ENCODE measurements at regions of chr1 and their contacts with region 1.

Region 1: GRCh38 chr1:61049850-61050540 is 32.4 kb upstream of the NFIA start:
- DNase-seq: peak; percentile 87 to 95
- ATAC-seq: peak; percentile 66 to 70
- H3K4me3 ChIP-seq: peak overlapping the region; percentile 75 to 99 (median 96)
- H3K27ac ChIP-seq: peak overlapping the region; percentile 92 to 100 (median 96)
- H3K4me1 ChIP-seq: peaks cover 22 to 28% of the 10 kb centered on the region in 2 donors
- H3K27me3 ChIP-seq: no peaks in the 10 kb centered on the region
- CTCF ChIP-seq: peak; percentile 94 to 99 (median 97)
- POLR2A ChIP-seq: peak in 1 of 2 donors; percentile 54

Region 2: DNA sequence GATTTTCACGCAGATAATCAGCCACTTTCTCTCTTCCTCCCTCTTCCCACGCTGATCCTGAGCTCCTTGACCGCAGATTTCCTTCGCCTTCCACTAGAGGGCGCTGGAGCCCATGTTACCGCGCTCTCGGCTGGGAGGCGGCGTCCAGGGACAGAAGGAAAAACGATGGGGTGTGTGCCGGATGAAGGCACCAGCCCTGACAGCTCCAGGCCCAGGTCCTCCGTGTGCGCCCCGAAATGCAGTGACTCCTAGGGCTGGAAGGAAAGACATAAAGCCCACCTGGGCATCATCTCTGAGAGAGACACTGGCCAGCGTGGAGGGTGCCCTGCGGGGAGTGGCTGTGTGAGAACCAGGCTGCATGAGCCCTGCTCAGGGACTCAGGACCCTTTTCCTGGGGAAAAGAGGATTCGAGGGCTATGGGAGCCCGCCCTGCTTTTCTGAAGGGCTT is 1078.5 kb before region 1 on chr1:
- in situ Hi-C with region 1: loop called in 3 of 4 experiments (anchors 25 kb)
- intact Hi-C with region 1: no loop called
- DNase-seq: peak; percentile 6 to 44
- ATAC-seq: peak; percentile 80 to 90
- H3K4me3 ChIP-seq: no peak overlapping the region
- H3K27ac ChIP-seq: no peak overlapping the region
- H3K4me1 ChIP-seq: peaks cover 8 to 11% of the 10 kb centered on the region in 2 donors
- H3K27me3 ChIP-seq: no peaks in the 10 kb centered on the region
- CTCF ChIP-seq: peak; percentile 51 to 90 (median 81)
- POLR2A ChIP-seq: no peak

Region 3: GRCh38 chr1:60813071-60813470 is 236.9 kb before region 1 on chr1:
- in situ Hi-C with region 1: no loop called
- intact Hi-C with region 1: no loop called
- DNase-seq: no peak
- ATAC-seq: no peak
- H3K4me3 ChIP-seq: no peak overlapping the region
- H3K27ac ChIP-seq: no peak overlapping the region
- H3K4me1 ChIP-seq: no peaks in the 10 kb centered on the region
- H3K27me3 ChIP-seq: no peaks in the 10 kb centered on the region
- CTCF ChIP-seq: no peak
- POLR2A ChIP-seq: no peak

Region 4: GRCh38 chr1:60989749-60990713 is 60.0 kb before region 1 on chr1:
- in situ Hi-C with region 1: no loop called
- intact Hi-C with region 1: no loop called
- DNase-seq: peak in 1 of 2 donors; percentile 19
- ATAC-seq: peak in 1 of 2 donors; percentile 37
- H3K4me3 ChIP-seq: no peak overlapping the region
- H3K27ac ChIP-seq: peak overlapping the region in 2 of 4 donors; percentile 24 to 44
- H3K4me1 ChIP-seq: peaks cover 4 to 12% of the 10 kb centered on the region in 2 donors
- H3K27me3 ChIP-seq: no peaks in the 10 kb centered on the region
- CTCF ChIP-seq: no peak
- POLR2A ChIP-seq: no peak

Region 5: DNA sequence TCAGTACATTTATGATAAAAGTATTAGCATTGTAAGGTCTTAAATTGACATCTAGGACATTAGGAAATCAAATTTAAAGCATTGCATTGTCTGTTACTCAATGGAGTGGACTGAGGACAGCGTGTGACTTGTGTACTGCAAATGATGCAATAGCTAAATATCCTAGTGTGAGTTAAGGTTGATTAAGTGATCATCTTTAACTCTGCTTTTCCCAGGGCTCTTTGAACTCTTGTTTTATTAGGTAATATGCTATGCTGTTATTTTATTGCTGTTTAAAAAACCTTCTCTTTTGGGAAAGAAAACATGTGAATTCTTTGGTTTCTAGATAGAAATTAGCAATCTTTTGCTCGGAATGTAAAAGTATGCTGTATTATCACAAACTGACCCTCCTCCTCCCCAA is 71.0 kb after region 1 on chr1:
- in situ Hi-C with region 1: no loop called
- intact Hi-C with region 1: loop called (anchors 2 kb)
- DNase-seq: peak; percentile 32 to 45
- ATAC-seq: peak; percentile 79 to 81
- H3K4me3 ChIP-seq: peak overlapping the region; percentile 35 to 46 (median 45)
- H3K27ac ChIP-seq: peak overlapping the region; percentile 81 to 93 (median 88)
- H3K4me1 ChIP-seq: peaks cover 86 to 91% of the 10 kb centered on the region in 2 donors
- H3K27me3 ChIP-seq: no peaks in the 10 kb centered on the region
- CTCF ChIP-seq: peak in 1 of 5 experiments; percentile 9
- POLR2A ChIP-seq: peak in 1 of 2 donors; percentile 9

Region 6: DNA sequence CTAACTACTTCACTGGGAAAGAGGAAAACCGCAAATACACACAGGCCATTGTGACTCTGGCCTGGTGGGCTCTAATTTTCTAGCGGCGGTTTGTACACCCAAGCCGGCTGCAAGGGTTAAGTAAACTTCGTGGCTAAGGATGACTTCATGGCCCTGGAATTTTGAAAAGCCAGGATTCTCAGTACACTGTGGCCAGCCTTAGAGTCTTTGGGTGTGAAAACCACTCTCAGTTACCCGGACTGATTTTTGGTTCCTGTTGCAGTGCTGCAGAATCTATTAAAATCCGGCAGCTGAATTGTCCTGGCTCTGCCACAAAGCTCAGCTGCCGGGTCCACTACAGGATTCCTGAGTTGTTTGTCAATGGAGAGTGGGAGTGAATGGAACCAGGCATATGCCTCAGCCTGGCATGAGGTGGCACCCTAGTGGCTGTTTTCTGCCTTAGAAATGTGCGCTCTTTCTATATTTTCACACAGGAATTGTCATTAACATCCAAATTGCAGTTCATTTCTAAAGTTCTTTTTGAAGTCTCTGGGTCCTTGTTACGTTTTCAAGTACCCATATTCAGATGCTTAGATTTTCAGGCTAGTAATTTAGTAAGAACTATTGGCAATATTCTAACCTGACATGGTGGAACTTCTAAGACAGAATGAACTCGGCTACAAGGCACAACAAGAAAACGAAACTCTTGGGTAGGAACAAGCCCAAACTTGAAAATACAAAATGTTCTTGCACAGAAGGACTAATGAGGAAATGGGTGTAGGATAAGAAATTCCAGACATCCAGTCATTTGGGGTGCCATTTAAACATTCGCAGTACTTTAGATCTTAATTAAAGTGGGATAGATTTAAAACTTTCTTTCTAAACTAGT is 288.2 kb after region 1 on chr1:
- in situ Hi-C with region 1: loop called (anchors 5 to 25 kb)
- intact Hi-C with region 1: loop called (anchors 1 kb)
- DNase-seq: peak; percentile 74 to 81
- ATAC-seq: peak; percentile 87 to 92
- H3K4me3 ChIP-seq: peak overlapping the region; percentile 32 to 41 (median 38)
- H3K27ac ChIP-seq: peak overlapping the region; percentile 75 to 83 (median 78)
- H3K4me1 ChIP-seq: peaks cover 33 to 35% of the 10 kb centered on the region in 2 donors
- H3K27me3 ChIP-seq: no peaks in the 10 kb centered on the region
- CTCF ChIP-seq: peak; percentile 70 to 86 (median 78)
- POLR2A ChIP-seq: no peak

Region 7: DNA sequence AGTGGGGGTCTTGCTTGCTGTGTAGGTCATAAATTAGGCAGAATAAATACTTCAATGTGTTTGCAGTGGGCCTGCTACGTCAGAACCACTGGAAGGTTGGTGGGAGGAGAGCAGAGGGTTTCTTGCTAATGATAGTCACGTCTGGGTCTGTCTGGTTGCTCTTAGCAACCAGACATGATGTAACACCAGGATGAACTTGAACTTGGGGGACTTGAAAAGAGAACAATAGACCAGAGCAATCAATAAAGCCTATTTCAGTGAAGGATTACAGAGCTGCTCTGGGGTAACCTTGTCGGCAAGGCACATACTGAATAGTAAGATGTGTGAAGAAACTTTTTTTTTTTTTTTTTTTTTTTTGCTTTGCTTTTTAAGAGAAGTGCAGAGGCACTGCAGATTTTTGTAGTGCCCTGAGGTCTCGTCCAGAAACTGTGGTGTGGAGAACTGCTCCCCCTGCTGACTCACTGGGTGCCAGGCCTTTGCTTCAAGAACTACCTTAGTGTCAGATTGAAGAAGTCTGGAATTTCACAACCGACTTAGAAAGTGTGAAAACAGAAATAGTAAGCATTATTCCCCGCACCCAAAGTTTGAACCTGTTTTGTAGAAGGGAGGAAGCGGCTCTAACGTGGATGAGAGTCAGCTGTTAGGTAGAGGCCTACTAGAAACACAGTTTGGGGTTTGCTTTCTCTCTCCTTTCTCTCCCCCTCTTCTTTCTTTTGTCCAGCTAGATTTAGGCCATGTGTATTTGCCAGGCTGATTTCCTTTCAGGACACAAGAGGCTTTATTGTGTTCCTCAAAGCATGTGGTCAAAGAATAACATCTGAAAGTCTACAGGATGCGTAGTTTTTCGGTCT is 403.3 kb after region 1 on chr1:
- in situ Hi-C with region 1: loop called (anchors 5 to 10 kb)
- intact Hi-C with region 1: loop called (anchors 1 kb)
- DNase-seq: peak; percentile 85 to 89
- ATAC-seq: peak; percentile 71 to 75
- H3K4me3 ChIP-seq: no peak overlapping the region
- H3K27ac ChIP-seq: peak overlapping the region; percentile 70 to 82 (median 73)
- H3K4me1 ChIP-seq: peaks cover 60 to 61% of the 10 kb centered on the region in 2 donors
- H3K27me3 ChIP-seq: no peaks in the 10 kb centered on the region
- CTCF ChIP-seq: peak; percentile 65 to 82 (median 73)
- POLR2A ChIP-seq: no peak

Region 8: DNA sequence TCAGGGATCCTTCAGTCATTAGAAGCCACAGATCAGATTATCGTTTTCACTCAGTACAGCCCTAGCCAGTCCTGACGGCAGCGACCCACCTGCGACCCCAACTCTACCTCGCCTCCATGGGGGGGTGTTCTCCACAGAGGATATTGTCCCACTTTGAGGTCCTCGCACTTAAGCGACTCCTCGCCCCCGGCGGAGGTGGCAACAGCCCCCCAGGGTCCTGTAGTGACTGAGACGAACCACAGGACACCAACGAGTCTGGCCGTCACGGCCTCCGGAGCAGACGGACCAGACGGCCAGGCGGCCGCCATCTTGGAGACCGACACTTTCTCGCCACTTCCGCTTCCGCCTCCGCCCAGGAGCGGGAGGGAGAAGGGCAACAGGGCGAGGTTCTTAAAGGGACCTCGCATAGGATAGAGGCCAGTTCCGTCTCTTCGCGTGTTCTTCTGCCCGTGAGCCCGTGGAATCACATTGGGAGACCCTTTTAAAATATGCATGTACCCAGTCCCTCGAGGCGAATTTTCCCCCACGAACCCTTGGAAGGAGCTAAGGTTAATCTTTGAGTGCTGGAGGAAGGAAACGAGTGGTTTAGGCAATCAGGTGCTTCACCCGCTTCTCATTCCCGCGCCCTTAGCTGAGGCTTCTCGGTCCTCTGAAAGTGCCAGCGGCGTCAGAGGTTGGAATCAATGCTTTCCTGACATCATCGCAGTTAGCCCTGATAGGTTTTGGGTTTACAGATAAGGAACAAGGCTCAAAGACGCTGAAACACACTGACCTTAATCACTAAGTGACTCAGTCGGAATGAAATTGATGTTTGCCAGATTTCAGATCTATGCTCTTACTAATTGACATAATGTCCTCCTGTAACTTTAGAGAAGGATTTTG is 675.1 kb after region 1 on chr1 and contains the start of gene TM2D1:
- in situ Hi-C with region 1: no loop called
- intact Hi-C with region 1: loop called (anchors 5 kb)
- DNase-seq: peak; percentile 81 to 85
- ATAC-seq: peak; percentile 99
- H3K4me3 ChIP-seq: peak within 1 kb of the TSS; percentile 86 to 98 (median 96)
- H3K27ac ChIP-seq: peak within 1 kb of the TSS; percentile 91 to 96 (median 94)
- H3K4me1 ChIP-seq: peaks cover 17 to 18% of the 10 kb centered on the region in 2 donors
- H3K27me3 ChIP-seq: no peaks in the 10 kb centered on the region
- CTCF ChIP-seq: no peak
- POLR2A ChIP-seq: peak; percentile 64 to 77
- total RNA-seq, gene TM2D1: 33.6 to 56.8 (median 38.5) TPM

Region 9: DNA sequence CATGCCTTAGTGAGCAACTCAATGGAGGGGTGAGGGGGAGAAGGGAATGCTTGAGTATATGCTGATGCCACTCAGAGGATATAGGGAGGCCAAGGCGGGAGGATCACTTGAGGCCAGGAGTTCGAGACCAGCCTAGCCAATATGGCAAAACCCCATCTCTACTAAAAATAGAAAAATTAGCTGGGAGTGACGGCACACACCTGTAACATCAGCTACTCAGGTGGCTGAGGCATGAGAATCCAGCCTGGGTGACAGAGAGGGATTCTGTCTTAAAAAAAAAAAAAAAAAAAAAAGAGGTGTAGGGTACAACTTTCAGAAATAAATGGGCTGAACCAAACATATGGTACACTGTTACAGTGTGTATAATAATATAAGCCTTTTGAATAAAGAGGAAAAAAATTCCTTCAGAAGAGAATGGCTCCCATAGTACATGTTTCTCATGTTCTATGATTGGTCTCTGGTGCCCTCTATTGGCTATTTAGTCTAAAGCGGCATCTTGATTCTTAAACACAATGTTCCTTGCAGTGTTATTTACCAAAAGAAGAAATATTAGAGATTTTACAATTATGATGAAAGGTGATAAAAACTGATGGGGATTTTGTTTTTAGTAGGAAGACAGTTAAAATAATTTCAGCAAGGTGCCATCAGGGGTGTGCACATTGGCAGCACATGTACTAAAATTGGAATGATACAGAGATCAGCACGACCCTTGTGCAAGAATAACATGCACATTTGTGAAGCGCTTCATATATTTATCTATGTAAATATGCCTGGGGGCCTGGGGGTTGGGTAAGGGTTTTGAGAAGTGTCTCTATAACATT is 802.1 kb after region 1 on chr1:
- in situ Hi-C with region 1: loop called (anchors 10 to 25 kb)
- intact Hi-C with region 1: no loop called
- DNase-seq: no peak
- ATAC-seq: peak; percentile 78 to 83
- H3K4me3 ChIP-seq: no peak overlapping the region
- H3K27ac ChIP-seq: no peak overlapping the region
- H3K4me1 ChIP-seq: peaks cover 0 to 8% of the 10 kb centered on the region in 2 donors
- H3K27me3 ChIP-seq: no peaks in the 10 kb centered on the region
- CTCF ChIP-seq: peak in 4 of 5 experiments; percentile 55 to 72 (median 72)
- POLR2A ChIP-seq: no peak

Measured in gastrocnemius medialis (tissue), 4 donors.